Heart left ventricle (tissue), 16 donors: ENCODE measurements at regions of chr22 and their contacts with region 1.

Region 1: DNA sequence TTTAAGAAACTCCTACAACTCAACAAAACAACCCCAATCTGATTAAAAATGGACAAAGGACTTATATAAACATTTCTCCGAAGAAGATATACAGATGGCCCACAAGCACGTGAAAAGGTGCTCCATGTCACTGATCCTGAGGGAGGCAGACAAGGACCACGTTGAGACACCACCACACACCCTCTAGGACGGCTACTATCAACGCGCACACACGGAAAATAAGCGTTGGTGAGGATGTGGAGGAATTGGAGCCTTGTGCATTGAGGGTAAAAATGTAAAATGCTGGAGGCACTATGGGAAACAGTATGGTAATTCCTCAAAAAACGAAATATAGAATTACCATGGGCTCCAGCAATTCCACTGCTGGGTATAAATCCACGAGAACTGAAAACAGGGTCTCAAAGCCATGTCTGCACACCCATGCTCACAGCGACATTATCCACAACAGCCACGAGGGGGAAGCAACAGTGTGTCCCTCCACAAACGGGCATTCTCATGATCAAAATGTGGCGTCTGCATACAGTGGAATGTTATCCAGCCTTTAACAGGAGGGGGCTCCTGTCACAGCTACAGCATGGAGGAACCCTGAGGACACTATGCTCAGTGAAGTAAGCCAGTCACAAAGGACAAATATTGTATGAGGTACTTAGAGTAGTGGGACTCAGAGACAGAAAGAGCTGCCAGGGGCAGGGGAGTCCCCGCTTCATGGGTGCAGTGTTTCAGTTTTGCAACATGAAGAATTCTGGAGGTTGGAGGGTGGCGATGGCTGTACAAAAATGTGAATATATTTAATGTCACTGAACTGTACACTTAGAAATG is 22.5 kb downstream of the YPEL1 start:
- DNase-seq: peak in 4 of 5 donors; percentile 66 to 71 (median 69)
- ATAC-seq: peak; percentile 84 to 94 (median 92)
- H3K4me3 ChIP-seq: peak overlapping the region in 6 of 12 donors; percentile 5 to 37 (median 20)
- H3K27ac ChIP-seq: peak overlapping the region in 2 of 12 donors; percentile 0 to 49
- H3K4me1 ChIP-seq: peaks cover 0 to 22% (median 11%) of the 10 kb centered on the region in 12 donors
- H3K27me3 ChIP-seq: no peaks in the 10 kb centered on the region
- CTCF ChIP-seq: peak; percentile 70 to 85 (median 77)
- POLR2A ChIP-seq: no peak

Region 2: GRCh38 chr22:21641417-21641788 is 71.7 kb before region 1 on chr22:
- intact Hi-C with region 1: no loop called
- DNase-seq: peak in 1 of 5 donors; percentile 45
- ATAC-seq: peak; percentile 24 to 55 (median 43)
- H3K4me3 ChIP-seq: peak overlapping the region; percentile 15 to 87 (median 74)
- H3K27ac ChIP-seq: peak overlapping the region in 11 of 12 donors; percentile 19 to 76 (median 66)
- H3K4me1 ChIP-seq: peaks cover 0 to 26% (median 13%) of the 10 kb centered on the region in 12 donors
- H3K27me3 ChIP-seq: no peaks in the 10 kb centered on the region
- CTCF ChIP-seq: peak in 10 of 12 donors; percentile 10 to 55 (median 36)
- POLR2A ChIP-seq: no peak

Region 3: GRCh38 chr22:21791635-21792625 is 78.8 kb after region 1 on chr22:
- intact Hi-C with region 1: loop called in 1 of 10 experiments (anchors 10 kb)
- DNase-seq: no peak
- ATAC-seq: no peak
- H3K4me3 ChIP-seq: no peak overlapping the region
- H3K27ac ChIP-seq: no peak overlapping the region
- H3K4me1 ChIP-seq: peaks cover 0 to 7% (median under 1%) of the 10 kb centered on the region in 12 donors
- H3K27me3 ChIP-seq: no peaks in the 10 kb centered on the region
- CTCF ChIP-seq: no peak
- POLR2A ChIP-seq: no peak

Region 4: GRCh38 chr22:21952586-21953571 is 239.8 kb after region 1 on chr22 and contains the start of gene PPM1F:
- intact Hi-C with region 1: loop called in 7 of 10 experiments (anchors 1 to 5 kb)
- DNase-seq: peak; percentile 85 to 94 (median 91)
- ATAC-seq: peak; percentile 39 to 90 (median 81)
- H3K4me3 ChIP-seq: peak within 1 kb of the TSS; percentile 48 to 90 (median 74)
- H3K27ac ChIP-seq: peak within 1 kb of the TSS; percentile 25 to 98 (median 82)
- H3K4me1 ChIP-seq: peaks cover 0 to 48% (median 39%) of the 10 kb centered on the region in 12 donors
- H3K27me3 ChIP-seq: no peaks in the 10 kb centered on the region
- CTCF ChIP-seq: peak; percentile 70 to 96 (median 88)
- POLR2A ChIP-seq: peak in 1 of 2 donors; percentile 72
- total RNA-seq, gene PPM1F: 13.9 to 51.1 (median 21.1) TPM